ENCODE measurements at regions of chr9 and their contacts with region 1.

Region 1: DNA sequence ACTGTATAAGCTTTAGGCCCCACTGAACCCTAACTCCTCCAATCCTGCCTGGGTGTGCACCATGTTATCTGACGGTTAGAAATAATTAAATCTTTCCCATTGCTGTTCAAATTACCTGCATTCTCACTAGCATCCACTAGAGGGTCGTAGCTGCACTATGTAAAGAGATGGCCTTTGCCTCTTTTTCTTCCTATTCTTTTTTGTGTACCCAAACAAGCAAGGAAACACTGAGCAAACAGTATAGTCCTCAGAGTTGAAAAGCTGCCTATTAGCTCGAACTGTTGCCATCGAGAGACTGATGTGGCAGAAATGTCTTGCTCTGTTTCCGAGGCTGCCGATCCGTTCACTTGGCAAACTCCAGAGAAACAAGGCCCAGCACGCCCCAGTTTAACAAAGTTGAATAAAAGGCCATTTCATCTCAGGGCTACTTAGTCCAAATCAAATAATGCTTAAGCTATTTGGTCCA is 163.8 kb upstream of the TRPM3 start:
- DNase-seq: peak; percentile 69
- H3K4me3 ChIP-seq: no peak overlapping the region
- H3K27ac ChIP-seq: no peak overlapping the region
- H3K4me1 ChIP-seq: no peaks in the 10 kb centered on the region
- H3K27me3 ChIP-seq: no peaks in the 10 kb centered on the region; the same call in 1 of the 2 replicates

Region 2: GRCh38 chr9:71675129-71675856 is 390.1 kb after region 1 on chr9:
- in situ Hi-C with region 1: no loop called
- DNase-seq: no peak
- H3K4me3 ChIP-seq: no peak overlapping the region
- H3K27ac ChIP-seq: no peak overlapping the region
- H3K4me1 ChIP-seq: peaks cover 27% of the 10 kb centered on the region
- H3K27me3 ChIP-seq: no peaks in the 10 kb centered on the region

Region 3: GRCh38 chr9:71783120-71783530 is 497.9 kb after region 1 on chr9:
- in situ Hi-C with region 1: loop called (anchors 25 kb)
- DNase-seq: no peak
- H3K4me3 ChIP-seq: no peak overlapping the region
- H3K27ac ChIP-seq: no peak overlapping the region
- H3K4me1 ChIP-seq: no peaks in the 10 kb centered on the region
- H3K27me3 ChIP-seq: no peaks in the 10 kb centered on the region

Measured in GM23248 (cell line).